A673 (cell line): ENCODE measurements at regions of chr11 and their contacts with region 1.

Region 1: GRCh38 chr11:4187055-4187988 is 92.7 kb downstream of the RRM1 start:
- DNase-seq: peak; percentile 83
- H3K4me3 ChIP-seq: peak overlapping the region; percentile 50
- H3K27ac ChIP-seq: no peak overlapping the region
- H3K4me1 ChIP-seq: no peaks in the 10 kb centered on the region
- H3K27me3 ChIP-seq: no peaks in the 10 kb centered on the region
- CTCF ChIP-seq: peak; percentile 87

Region 2: GRCh38 chr11:4039011-4039410 is 148.3 kb before region 1 on chr11:
- CTCF ChIA-PET with region 1: no interaction called
- POLR2A ChIA-PET with region 1: no interaction called
- intact Hi-C with region 1: no loop called
- DNase-seq: no peak
- H3K4me3 ChIP-seq: no peak overlapping the region
- H3K27ac ChIP-seq: no peak overlapping the region
- H3K4me1 ChIP-seq: no peaks in the 10 kb centered on the region
- H3K27me3 ChIP-seq: no peaks in the 10 kb centered on the region
- CTCF ChIP-seq: no peak

Region 3: GRCh38 chr11:4118107-4118506 is 69.2 kb before region 1 on chr11:
- CTCF ChIA-PET with region 1: no interaction called
- POLR2A ChIA-PET with region 1: no interaction called
- intact Hi-C with region 1: no loop called
- DNase-seq: no peak
- H3K4me3 ChIP-seq: no peak overlapping the region
- H3K27ac ChIP-seq: no peak overlapping the region
- H3K4me1 ChIP-seq: no peaks in the 10 kb centered on the region
- H3K27me3 ChIP-seq: no peaks in the 10 kb centered on the region
- CTCF ChIP-seq: no peak

Region 4: GRCh38 chr11:4493480-4493818 is 306.1 kb after region 1 on chr11:
- CTCF ChIA-PET with region 1: interaction called, 7 read pairs
- POLR2A ChIA-PET with region 1: no interaction called
- intact Hi-C with region 1: loop called (anchors 1 kb)
- DNase-seq: no peak
- H3K4me3 ChIP-seq: no peak overlapping the region
- H3K27ac ChIP-seq: no peak overlapping the region
- H3K4me1 ChIP-seq: no peaks in the 10 kb centered on the region
- H3K27me3 ChIP-seq: peaks cover 29% of the 10 kb centered on the region
- CTCF ChIP-seq: no peak

Region 5: GRCh38 chr11:4539603-4540219 is 352.4 kb after region 1 on chr11:
- CTCF ChIA-PET with region 1: interaction called, 28 read pairs
- POLR2A ChIA-PET with region 1: interaction called, 4 read pairs
- intact Hi-C with region 1: loop called (anchors 1 kb)
- DNase-seq: peak; percentile 49
- H3K4me3 ChIP-seq: no peak overlapping the region
- H3K27ac ChIP-seq: no peak overlapping the region
- H3K4me1 ChIP-seq: no peaks in the 10 kb centered on the region
- H3K27me3 ChIP-seq: peaks cover 8% of the 10 kb centered on the region
- CTCF ChIP-seq: peak; percentile 80

Region 6: DNA sequence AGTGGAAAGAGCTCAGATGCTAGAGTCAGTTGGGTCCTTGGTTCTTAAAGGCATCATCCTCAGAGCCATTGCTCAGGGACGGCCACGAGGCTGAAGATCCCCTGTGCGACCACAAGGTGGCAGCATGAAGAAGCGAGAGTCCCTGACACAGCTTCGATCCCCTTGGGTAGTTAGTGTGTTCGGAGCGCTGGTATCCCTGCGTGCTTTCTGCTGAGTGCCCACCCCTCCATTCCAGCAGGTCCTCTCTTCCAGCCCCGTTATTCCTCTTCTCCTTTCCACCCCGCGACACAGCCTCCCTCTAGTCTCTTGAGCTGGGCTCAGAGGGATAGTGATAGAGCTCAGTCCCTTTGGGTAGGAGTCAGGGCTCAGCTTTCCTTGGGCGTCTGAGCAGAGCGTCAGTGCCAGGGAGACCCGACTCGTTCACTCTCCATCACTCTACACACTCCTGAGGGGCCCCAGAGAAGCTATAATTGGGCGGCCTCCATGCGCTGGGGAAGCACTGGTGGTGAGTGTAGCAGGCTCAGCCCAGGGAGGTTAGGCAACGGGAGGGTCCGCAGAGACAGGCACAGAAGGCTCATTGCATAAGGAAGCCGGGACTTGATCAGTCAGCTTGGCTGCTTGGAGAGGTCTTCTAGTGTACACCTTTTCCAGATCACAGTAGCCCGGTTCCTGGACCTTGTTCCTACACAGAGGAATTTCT is 449.8 kb after region 1 on chr11 and contains the start of gene OR51D1:
- CTCF ChIA-PET with region 1: no interaction called
- POLR2A ChIA-PET with region 1: no interaction called
- intact Hi-C with region 1: loop called (anchors 10 kb)
- DNase-seq: peak; percentile 74
- H3K4me3 ChIP-seq: no peak within 1 kb of the TSS
- H3K27ac ChIP-seq: no peak within 1 kb of the TSS
- H3K4me1 ChIP-seq: no peaks in the 10 kb centered on the region
- H3K27me3 ChIP-seq: peaks cover 9% of the 10 kb centered on the region
- CTCF ChIP-seq: peak; percentile 83
- total RNA-seq, gene OR51D1: not detected in 2 replicates

Region 7: DNA sequence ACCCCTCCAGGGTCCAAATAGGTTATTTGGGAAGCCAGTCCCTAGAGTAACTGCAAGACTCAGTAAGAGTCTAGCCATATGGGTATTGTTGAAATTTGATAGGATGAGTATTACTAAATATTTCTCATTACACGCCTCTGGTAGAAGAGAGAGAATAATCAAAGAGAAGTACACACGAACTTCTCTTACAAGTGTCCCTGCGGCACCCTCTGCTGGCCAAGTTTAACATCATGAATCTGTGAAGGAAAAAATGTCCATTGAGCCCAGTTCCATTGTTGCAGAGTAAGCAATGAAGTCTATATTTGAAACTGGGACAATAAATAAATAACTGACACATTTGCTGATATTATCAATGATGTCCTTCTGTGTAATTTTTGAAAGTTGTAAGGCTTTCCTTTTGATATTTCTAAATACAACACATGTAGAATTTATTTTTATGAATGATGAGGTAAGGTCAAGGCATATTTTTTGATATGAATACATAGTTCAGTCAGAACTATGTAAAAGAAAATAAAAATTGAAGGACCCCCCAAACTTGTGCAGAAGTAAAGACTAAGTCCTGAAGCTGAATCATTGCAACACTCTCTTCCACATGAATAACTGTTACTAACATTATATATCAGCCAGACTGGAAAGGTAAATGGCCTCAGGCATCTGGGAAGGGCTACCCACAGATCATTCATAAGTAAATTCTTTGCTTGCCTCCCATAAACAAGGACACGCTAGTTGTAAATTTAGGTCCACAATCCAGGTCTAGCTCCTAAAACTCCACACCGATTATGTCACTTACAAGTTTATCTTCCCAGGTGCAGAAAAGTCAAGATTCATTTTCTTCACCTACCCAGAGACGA is 817.3 kb after region 1 on chr11:
- CTCF ChIA-PET with region 1: no interaction called
- POLR2A ChIA-PET with region 1: no interaction called
- intact Hi-C with region 1: loop called (anchors 5 kb)
- DNase-seq: peak; percentile 59
- H3K4me3 ChIP-seq: no peak overlapping the region
- H3K27ac ChIP-seq: no peak overlapping the region
- H3K4me1 ChIP-seq: no peaks in the 10 kb centered on the region
- H3K27me3 ChIP-seq: no peaks in the 10 kb centered on the region
- CTCF ChIP-seq: peak; percentile 65